Naive thymus-derived CD4-positive, alpha-beta T cell (primary cell): ENCODE measurements at regions of chr4 and their contacts with region 1.

Region 1: DNA sequence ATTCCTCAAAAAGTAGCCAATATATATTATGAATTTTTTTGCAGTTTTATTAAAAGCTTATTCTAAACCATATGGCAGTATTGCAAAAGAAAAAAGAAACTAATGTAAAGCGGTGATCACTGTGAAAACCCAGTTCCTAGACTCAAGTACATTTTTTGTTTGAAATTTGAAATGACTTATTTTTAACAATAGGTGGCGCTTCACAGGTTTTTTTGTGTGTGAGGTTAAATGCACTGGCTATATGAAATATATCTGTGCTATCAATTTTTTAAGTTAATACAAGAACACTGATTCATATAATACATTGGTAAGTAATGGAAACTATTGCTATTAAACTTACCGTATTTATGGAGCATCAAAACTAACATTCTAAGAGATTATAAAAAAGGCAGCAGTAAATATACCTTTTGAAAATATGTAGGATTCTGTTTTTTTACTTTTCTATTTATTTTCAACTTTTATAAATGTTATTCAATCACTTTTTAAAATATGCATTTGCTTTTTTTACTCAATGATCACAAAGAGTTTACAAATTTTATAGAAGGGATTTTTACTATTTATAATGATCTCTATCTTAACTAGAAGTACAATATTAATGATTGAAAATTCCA is 5.6 kb upstream of the SPRY1 start:
- DNase-seq: peak in 4 of 9 donors; percentile 9 to 32 (median 23)
- ATAC-seq: no peak
- H3K4me3 ChIP-seq: no peak overlapping the region
- H3K4me3 Mint-ChIP-seq: no peak overlapping the region
- H3K27ac ChIP-seq: no peak overlapping the region
- H3K27ac Mint-ChIP-seq: no peak overlapping the region
- H3K4me1 ChIP-seq: no peaks in the 10 kb centered on the region
- H3K4me1 Mint-ChIP-seq: peaks cover 0 to 4% (median 0%) of the 10 kb centered on the region in 7 donors
- H3K27me3 ChIP-seq: no peaks in the 10 kb centered on the region
- H3K27me3 Mint-ChIP-seq: peaks cover 0 to 33% (median 13%) of the 10 kb centered on the region in 5 donors

Region 2: DNA sequence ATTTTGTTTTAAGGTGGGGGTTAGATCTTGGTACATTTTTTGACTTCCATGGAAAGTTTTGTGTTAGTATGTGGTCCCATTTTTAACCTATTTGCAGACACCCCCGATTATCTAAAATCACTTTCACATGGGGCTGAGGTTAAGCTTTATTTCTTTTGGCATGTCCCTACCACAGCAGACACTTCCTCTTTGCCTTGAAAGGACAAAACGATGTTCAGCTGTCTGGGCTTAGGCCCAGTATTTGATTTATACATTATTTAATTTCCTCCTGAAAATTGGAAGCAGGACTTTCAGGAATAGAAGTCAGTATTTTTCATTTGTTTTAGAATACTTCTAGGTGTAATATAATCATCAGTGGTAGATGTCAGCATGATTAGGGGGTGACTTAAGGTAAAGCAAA is 106.8 kb before region 1 on chr4:
- CTCF ChIA-PET with region 1: no interaction called
- POLR2A ChIA-PET with region 1: no interaction called
- intact Hi-C with region 1: no loop called
- DNase-seq: no peak
- ATAC-seq: no peak
- H3K4me3 ChIP-seq: no peak overlapping the region
- H3K4me3 Mint-ChIP-seq: no peak overlapping the region
- H3K27ac ChIP-seq: no peak overlapping the region
- H3K27ac Mint-ChIP-seq: no peak overlapping the region
- H3K4me1 ChIP-seq: no peaks in the 10 kb centered on the region
- H3K4me1 Mint-ChIP-seq: peaks cover 0 to 12% (median 0%) of the 10 kb centered on the region in 7 donors
- H3K27me3 ChIP-seq: no peaks in the 10 kb centered on the region
- H3K27me3 Mint-ChIP-seq: no peaks in the 10 kb centered on the region

Region 3: DNA sequence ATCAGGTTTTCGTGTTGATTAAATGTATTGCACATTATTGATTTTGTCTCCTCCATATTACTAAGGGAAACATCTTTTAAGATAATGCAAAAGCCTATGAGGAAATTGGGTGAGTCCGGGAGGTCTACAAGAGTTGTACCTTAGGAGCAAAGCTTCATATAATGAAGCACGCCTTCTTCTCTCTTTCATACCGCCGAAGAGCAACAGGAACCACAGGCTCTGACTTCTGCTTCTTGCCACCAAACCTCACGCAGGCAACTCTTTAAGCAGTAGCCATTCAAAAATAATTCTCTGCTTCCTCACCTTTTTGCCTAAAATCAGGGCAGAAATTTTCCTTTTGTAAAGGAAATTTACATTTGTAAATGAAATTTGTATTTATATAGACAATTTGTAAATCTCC is 145.3 kb after region 1 on chr4:
- CTCF ChIA-PET with region 1: no interaction called
- POLR2A ChIA-PET with region 1: no interaction called
- intact Hi-C with region 1: no loop called
- DNase-seq: no peak
- ATAC-seq: no peak
- H3K4me3 ChIP-seq: no peak overlapping the region
- H3K4me3 Mint-ChIP-seq: peak overlapping the region in 1 of 10 donors; percentile 17
- H3K27ac ChIP-seq: no peak overlapping the region
- H3K27ac Mint-ChIP-seq: no peak overlapping the region
- H3K4me1 ChIP-seq: no peaks in the 10 kb centered on the region
- H3K4me1 Mint-ChIP-seq: peaks cover 0 to 9% (median 4%) of the 10 kb centered on the region in 7 donors
- H3K27me3 ChIP-seq: no peaks in the 10 kb centered on the region
- H3K27me3 Mint-ChIP-seq: peaks cover 0 to 4% (median 0%) of the 10 kb centered on the region in 5 donors

Region 4: DNA sequence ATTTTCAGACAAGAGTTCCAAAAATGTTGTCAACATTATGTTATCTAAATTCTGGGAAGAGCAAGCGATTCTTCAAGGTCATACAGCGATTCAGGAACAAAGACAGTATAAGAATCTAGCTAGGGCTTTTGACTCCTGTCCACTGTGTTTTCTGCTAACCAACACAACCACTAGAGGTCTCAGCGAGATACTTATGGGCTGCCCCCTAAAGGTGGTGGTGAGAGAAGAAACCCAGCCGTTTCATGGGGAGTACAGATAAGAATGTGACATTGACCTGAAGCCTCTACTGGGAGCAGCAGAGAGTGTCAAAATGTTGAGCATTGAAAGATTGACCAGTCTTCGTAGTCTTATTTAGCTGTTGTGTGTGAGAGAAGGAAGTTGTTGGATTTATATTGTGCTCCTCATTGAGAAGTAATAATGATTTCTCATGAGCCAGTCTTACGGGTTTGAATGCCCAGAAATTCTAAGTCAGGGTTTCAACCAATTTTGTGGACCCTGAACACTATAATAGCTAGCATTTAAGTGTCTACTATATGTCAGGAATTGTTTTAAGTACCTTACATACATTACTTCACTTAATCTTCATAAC is 173.9 kb after region 1 on chr4:
- CTCF ChIA-PET with region 1: no interaction called
- POLR2A ChIA-PET with region 1: no interaction called
- intact Hi-C with region 1: loop called (anchors 1 to 2 kb)
- DNase-seq: peak in 8 of 9 donors; percentile 1 to 55 (median 26)
- ATAC-seq: peak; percentile 98
- H3K4me3 ChIP-seq: no peak overlapping the region
- H3K4me3 Mint-ChIP-seq: no peak overlapping the region
- H3K27ac ChIP-seq: no peak overlapping the region
- H3K27ac Mint-ChIP-seq: no peak overlapping the region
- H3K4me1 ChIP-seq: no peaks in the 10 kb centered on the region
- H3K4me1 Mint-ChIP-seq: peaks cover 0 to 6% (median 0%) of the 10 kb centered on the region in 7 donors
- H3K27me3 ChIP-seq: no peaks in the 10 kb centered on the region
- H3K27me3 Mint-ChIP-seq: peaks cover 8 to 25% (median 16%) of the 10 kb centered on the region in 5 donors

Region 5: GRCh38 chr4:123661080-123661737 is 270.3 kb after region 1 on chr4:
- CTCF ChIA-PET with region 1: interaction called, 4 read pairs
- POLR2A ChIA-PET with region 1: no interaction called
- intact Hi-C with region 1: loop called (anchors 1 kb)
- DNase-seq: peak in 3 of 9 donors; percentile 3 to 6 (median 4)
- ATAC-seq: no peak
- H3K4me3 ChIP-seq: no peak overlapping the region
- H3K4me3 Mint-ChIP-seq: no peak overlapping the region
- H3K27ac ChIP-seq: no peak overlapping the region
- H3K27ac Mint-ChIP-seq: no peak overlapping the region
- H3K4me1 ChIP-seq: no peaks in the 10 kb centered on the region
- H3K4me1 Mint-ChIP-seq: peaks cover 0 to 7% (median 0%) of the 10 kb centered on the region in 7 donors
- H3K27me3 ChIP-seq: no peaks in the 10 kb centered on the region
- H3K27me3 Mint-ChIP-seq: peaks cover 3 to 31% (median 5%) of the 10 kb centered on the region in 5 donors

Region 6: DNA sequence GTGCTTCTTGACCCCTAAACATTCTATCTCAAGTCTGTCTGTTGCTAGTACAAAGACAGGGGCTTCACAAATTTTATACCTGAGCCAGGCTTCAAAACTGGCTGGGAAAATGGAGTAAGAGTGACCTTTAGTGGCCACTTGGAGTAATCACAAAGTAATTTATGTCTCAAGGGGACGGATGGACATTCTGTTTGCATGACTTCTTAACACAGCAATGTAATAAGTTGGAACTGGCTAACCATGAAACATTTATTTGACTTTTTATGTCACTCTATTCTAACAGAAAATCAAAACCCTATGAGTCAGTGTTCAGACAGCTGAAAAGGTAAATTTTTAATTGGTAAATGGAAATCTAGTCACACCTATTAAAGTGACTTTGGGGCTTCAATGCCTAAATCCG is 721.0 kb after region 1 on chr4:
- CTCF ChIA-PET with region 1: no interaction called
- POLR2A ChIA-PET with region 1: no interaction called
- intact Hi-C with region 1: loop called in 1 of 2 experiments (anchors 5 kb)
- DNase-seq: no peak
- ATAC-seq: no peak
- H3K4me3 ChIP-seq: no peak overlapping the region
- H3K4me3 Mint-ChIP-seq: no peak overlapping the region
- H3K27ac ChIP-seq: no peak overlapping the region
- H3K27ac Mint-ChIP-seq: no peak overlapping the region
- H3K4me1 ChIP-seq: no peaks in the 10 kb centered on the region
- H3K4me1 Mint-ChIP-seq: no peaks in the 10 kb centered on the region
- H3K27me3 ChIP-seq: no peaks in the 10 kb centered on the region
- H3K27me3 Mint-ChIP-seq: no peaks in the 10 kb centered on the region

Region 7: GRCh38 chr4:124262211-124263179 is 871.5 kb after region 1 on chr4:
- CTCF ChIA-PET with region 1: no interaction called
- POLR2A ChIA-PET with region 1: no interaction called
- intact Hi-C with region 1: loop called in 1 of 2 experiments (anchors 1 kb)
- DNase-seq: peak in 6 of 9 donors; percentile 7 to 28 (median 20)
- ATAC-seq: peak; percentile 47
- H3K4me3 ChIP-seq: no peak overlapping the region
- H3K4me3 Mint-ChIP-seq: no peak overlapping the region
- H3K27ac ChIP-seq: no peak overlapping the region
- H3K27ac Mint-ChIP-seq: no peak overlapping the region
- H3K4me1 ChIP-seq: no peaks in the 10 kb centered on the region
- H3K4me1 Mint-ChIP-seq: no peaks in the 10 kb centered on the region
- H3K27me3 ChIP-seq: no peaks in the 10 kb centered on the region
- H3K27me3 Mint-ChIP-seq: peaks cover 0 to 14% (median 4%) of the 10 kb centered on the region in 5 donors

Region 8: DNA sequence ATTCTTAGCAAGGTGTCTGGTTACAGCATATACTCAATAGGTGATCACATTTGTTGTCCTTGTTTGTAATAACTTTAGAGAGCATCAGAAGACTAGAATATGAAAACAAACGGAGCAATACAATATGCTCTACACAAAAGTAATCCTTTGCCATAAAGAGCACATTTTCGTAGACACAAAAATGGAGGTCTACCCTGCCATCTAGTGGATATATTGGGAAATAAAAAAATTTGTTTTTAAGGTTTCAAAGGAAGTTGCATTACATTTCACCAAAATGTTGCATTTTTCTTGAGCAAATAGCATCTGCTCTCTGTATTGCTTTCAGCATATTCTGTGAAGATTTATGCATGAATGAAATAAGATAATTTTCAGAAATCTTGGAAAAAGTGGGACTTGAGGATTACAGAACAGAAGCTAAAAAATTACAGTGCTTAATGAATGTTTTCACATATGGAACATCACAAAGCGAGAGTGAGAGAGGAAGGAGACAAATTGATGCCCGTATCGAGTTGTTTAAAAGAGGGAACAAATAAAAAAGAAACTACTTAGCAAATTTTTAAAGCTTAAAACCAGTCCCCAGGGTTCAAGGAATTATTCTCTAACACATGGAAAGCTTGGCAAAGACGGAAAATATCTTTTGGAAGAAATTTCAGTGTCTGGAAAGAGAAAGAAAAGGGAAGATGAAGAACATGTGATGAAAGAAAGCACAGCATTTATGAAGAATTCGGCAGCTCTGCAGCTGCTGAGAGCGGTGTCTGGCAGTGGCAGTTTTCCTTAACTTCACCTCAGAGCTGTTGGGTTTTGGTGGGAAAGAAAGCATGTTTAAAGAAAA is 931.5 kb after region 1 on chr4:
- CTCF ChIA-PET with region 1: interaction called, 4 read pairs
- POLR2A ChIA-PET with region 1: no interaction called
- intact Hi-C with region 1: loop called (anchors 1 to 10 kb)
- DNase-seq: peak in 4 of 9 donors; percentile 6 to 22 (median 12)
- ATAC-seq: no peak
- H3K4me3 ChIP-seq: no peak overlapping the region
- H3K4me3 Mint-ChIP-seq: no peak overlapping the region
- H3K27ac ChIP-seq: no peak overlapping the region
- H3K27ac Mint-ChIP-seq: no peak overlapping the region
- H3K4me1 ChIP-seq: no peaks in the 10 kb centered on the region
- H3K4me1 Mint-ChIP-seq: no peaks in the 10 kb centered on the region
- H3K27me3 ChIP-seq: no peaks in the 10 kb centered on the region
- H3K27me3 Mint-ChIP-seq: peaks cover 0 to 3% (median 0%) of the 10 kb centered on the region in 5 donors